WTC11 (cell line): ENCODE measurements at regions of chr11 and their contacts with region 1.

Region 1: DNA sequence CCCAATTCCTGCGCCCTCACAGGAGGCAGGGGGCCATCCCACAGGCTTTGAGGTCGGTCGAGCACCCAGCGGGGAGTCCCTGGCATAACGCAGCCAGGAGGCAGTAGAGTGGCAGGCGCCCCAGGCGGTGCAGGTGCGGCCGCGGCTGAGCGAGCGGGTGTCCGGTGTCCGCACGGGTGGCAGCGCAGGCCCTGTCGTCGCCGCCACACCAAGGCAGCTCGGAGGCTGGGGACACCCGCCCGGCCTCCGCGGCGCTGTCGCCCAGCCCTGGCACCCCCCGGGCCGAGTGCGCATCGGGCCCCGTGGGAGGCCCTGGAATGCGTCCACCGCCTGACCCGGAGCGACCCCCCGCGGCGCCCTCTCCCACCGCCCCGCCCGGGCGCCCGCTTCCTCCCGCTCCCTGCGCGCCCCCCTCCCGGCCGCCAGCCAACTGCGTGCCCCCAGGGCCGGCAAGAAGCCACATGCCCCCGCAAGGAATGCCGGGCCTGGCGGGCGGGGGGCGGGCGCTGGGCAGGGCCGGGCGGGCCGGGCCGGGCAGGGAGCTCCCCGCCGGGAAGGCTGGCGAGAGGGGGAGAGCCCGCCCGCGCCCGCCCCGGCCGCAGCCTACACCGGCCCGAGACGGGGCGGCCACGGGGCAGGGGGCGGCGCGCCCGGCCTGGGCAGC is 33.9 kb downstream of the PRDM11 start:
- DNase-seq: peak; percentile 63
- ATAC-seq: peak; percentile 71
- H3K4me3 Mint-ChIP-seq: peak overlapping the region; percentile 82
- H3K27ac Mint-ChIP-seq: no peak overlapping the region
- H3K4me1 Mint-ChIP-seq: peaks cover 10% of the 10 kb centered on the region
- H3K27me3 Mint-ChIP-seq: peaks cover 9% of the 10 kb centered on the region; the same call in 1 of the 2 replicates
- CTCF ChIP-seq: no peak

Region 2: GRCh38 chr11:45057938-45058646 is 122.2 kb before region 1 on chr11:
- CTCF ChIA-PET with region 1: no interaction called
- POLR2A ChIA-PET with region 1: no interaction called
- DNase-seq: no peak
- ATAC-seq: no peak
- H3K4me3 Mint-ChIP-seq: no peak overlapping the region
- H3K27ac Mint-ChIP-seq: no peak overlapping the region
- H3K4me1 Mint-ChIP-seq: peaks cover 28% of the 10 kb centered on the region
- H3K27me3 Mint-ChIP-seq: no peaks in the 10 kb centered on the region
- CTCF ChIP-seq: no peak

Region 3: DNA sequence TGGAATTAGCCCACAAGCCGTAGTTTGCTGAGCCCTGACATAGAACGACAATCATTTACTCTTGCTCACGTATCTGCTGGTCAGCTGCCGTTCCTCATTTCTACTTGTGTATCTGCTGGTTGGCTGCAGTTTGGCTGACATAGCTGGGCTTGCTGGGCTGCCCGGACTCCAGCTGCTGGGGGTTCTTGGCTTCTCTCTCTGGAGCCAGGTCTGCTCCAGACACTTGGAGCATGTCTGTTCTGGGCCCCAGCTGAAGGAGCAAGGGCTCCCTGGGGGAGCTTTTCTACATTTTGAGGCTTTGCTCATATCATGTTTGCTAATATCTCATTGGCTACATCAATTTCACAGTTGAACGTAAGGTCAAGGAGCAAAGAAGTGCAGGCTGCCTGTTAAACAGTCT is 13.4 kb after region 1 on chr11:
- CTCF ChIA-PET with region 1: interaction called, 11 read pairs
- POLR2A ChIA-PET with region 1: no interaction called
- DNase-seq: no peak
- ATAC-seq: no peak
- H3K4me3 Mint-ChIP-seq: no peak overlapping the region
- H3K27ac Mint-ChIP-seq: no peak overlapping the region
- H3K4me1 Mint-ChIP-seq: peaks cover 6% of the 10 kb centered on the region; the same call in 1 of the 2 replicates
- H3K27me3 Mint-ChIP-seq: no peaks in the 10 kb centered on the region
- CTCF ChIP-seq: no peak

Region 4: GRCh38 chr11:45209891-45210699 is 29.8 kb after region 1 on chr11:
- CTCF ChIA-PET with region 1: interaction called, 16 read pairs
- POLR2A ChIA-PET with region 1: no interaction called
- DNase-seq: peak; percentile 72
- ATAC-seq: peak; percentile 76
- H3K4me3 Mint-ChIP-seq: no peak overlapping the region; the same call in 1 of the 2 replicates
- H3K27ac Mint-ChIP-seq: peak overlapping the region; percentile 73; the same call in 1 of the 2 replicates
- H3K4me1 Mint-ChIP-seq: peaks cover 21% of the 10 kb centered on the region
- H3K27me3 Mint-ChIP-seq: no peaks in the 10 kb centered on the region
- CTCF ChIP-seq: no peak

Region 5: DNA sequence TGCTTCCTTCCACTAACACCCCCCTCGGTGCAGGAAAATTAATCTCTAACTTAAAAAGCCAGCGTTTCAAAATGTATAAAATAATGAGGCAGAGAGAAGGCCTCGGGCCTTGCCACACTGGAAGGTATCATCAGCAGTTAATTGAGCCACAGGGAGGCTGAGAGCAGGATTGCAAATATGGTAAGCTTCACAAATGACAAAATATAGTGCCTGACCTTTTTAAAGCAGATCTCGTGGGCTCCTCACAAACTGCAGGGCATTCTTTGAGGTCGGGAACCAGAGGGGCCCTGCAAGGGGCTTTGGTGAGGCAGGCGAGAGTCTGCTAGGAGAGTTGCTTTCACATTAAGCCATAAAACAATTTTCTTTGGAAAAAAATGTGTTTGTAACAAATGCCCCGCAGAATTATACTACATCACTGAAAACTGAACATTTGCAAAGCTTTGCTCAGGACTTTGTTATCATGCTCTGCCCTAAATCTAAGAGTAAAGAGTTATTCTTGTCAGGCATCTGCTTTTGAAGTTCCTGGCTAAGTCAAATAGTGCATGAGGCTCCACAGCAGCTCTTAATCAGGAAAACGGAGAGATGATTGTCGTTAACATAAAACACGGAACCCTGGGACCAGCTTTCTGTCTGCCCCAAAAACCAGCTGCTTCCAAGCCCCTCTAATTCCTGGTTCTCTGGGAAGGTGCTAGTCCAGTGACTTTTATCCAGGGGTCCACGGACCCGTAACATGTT is 167.2 kb after region 1 on chr11:
- CTCF ChIA-PET with region 1: no interaction called
- POLR2A ChIA-PET with region 1: no interaction called
- DNase-seq: no peak
- ATAC-seq: 0 out of 2 replicates have a peak, but pooled peaks have one; percentile 39
- H3K4me3 Mint-ChIP-seq: no peak overlapping the region
- H3K27ac Mint-ChIP-seq: no peak overlapping the region
- H3K4me1 Mint-ChIP-seq: peaks cover 57% of the 10 kb centered on the region
- H3K27me3 Mint-ChIP-seq: no peaks in the 10 kb centered on the region
- CTCF ChIP-seq: no peak